PC-9 (cell line): ENCODE measurements at regions of chr10 and their contacts with region 1.

Region 1: GRCh38 chr10:27661514-27662286 is 83.9 kb downstream of the MKX start:
- DNase-seq: no peak
- H3K4me3 ChIP-seq: no peak overlapping the region
- H3K27ac ChIP-seq: no peak overlapping the region
- H3K4me1 ChIP-seq: no peaks in the 10 kb centered on the region
- H3K27me3 ChIP-seq: peaks cover 15% of the 10 kb centered on the region
- CTCF ChIP-seq: no peak

Region 2: GRCh38 chr10:27446091-27446918 is 215.4 kb before region 1 on chr10:
- CTCF ChIA-PET with region 1: no interaction called
- POLR2A ChIA-PET with region 1: no interaction called
- intact Hi-C with region 1: loop called (anchors 5 kb)
- DNase-seq: no peak
- H3K4me3 ChIP-seq: no peak overlapping the region
- H3K27ac ChIP-seq: no peak overlapping the region
- H3K4me1 ChIP-seq: no peaks in the 10 kb centered on the region
- H3K27me3 ChIP-seq: no peaks in the 10 kb centered on the region
- CTCF ChIP-seq: peak; percentile 52